Activated CD4-positive, alpha-beta memory T cell treated with anti-CD3 and anti-CD28 coated beads for 36 hours (primary cell): ENCODE measurements at regions of chr9 and their contacts with region 1.

Region 1: DNA sequence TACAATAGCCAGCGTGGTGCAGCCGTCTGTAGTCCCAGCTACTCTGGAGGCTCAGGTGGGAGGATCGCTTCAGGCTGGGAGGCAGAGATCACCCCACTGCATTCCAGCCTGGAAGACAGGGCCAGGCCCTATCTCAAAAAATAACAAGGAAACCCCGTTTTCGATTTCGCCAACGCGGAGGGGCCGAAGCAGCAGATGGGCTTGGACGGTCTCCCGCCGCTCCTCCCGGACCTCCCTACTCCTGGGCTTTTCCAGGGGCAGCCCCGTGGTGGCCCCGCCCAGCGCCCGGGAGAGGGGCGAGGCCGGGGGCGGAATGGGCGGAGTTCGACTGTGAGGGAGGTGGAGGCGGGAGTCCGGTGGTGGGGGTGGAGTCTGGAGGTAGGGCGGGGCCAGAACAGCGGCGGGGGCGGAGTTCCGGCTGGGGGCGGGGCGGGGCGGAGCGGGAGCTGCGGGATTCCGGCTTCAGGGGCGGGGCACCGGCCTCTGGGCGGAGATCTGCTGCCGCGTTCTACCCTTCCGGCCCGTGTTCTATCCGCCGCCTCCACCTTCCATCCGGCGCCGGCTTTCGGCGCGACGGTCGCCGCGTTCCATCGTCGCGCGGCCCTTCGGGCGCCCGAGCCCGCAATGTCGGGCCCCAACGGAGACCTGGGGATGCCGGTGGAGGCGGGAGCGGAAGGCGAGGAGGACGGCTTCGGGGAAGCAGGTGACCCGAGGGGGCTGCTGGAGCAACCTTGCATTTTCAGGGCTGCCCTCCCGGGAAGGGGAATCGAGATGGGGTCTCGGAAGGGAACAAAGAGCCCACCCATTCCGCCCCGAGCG is at the start of gene BBLN:
- DNase-seq: peak; percentile 97
- H3K4me3 Mint-ChIP-seq: peak within 1 kb of the TSS; percentile 74
- H3K27ac Mint-ChIP-seq: peak within 1 kb of the TSS; percentile 82
- H3K4me1 Mint-ChIP-seq: peaks cover 24% of the 10 kb centered on the region
- H3K27me3 Mint-ChIP-seq: no peaks in the 10 kb centered on the region
- total RNA-seq, gene BBLN: 86.9 to 90.1 TPM

Region 2: GRCh38 chr9:127742435-127743088 is 417.4 kb before region 1 on chr9:
- CTCF ChIA-PET with region 1: no interaction called
- POLR2A ChIA-PET with region 1: no interaction called
- intact Hi-C with region 1: no loop called
- DNase-seq: no peak
- H3K4me3 Mint-ChIP-seq: no peak overlapping the region
- H3K27ac Mint-ChIP-seq: no peak overlapping the region
- H3K4me1 Mint-ChIP-seq: no peaks in the 10 kb centered on the region
- H3K27me3 Mint-ChIP-seq: no peaks in the 10 kb centered on the region

Region 3: GRCh38 chr9:127987103-127987614 is 172.8 kb before region 1 on chr9:
- CTCF ChIA-PET with region 1: no interaction called
- POLR2A ChIA-PET with region 1: no interaction called
- intact Hi-C with region 1: no loop called
- DNase-seq: no peak
- H3K4me3 Mint-ChIP-seq: no peak overlapping the region
- H3K27ac Mint-ChIP-seq: no peak overlapping the region
- H3K4me1 Mint-ChIP-seq: peaks cover 26% of the 10 kb centered on the region
- H3K27me3 Mint-ChIP-seq: no peaks in the 10 kb centered on the region

Region 4: DNA sequence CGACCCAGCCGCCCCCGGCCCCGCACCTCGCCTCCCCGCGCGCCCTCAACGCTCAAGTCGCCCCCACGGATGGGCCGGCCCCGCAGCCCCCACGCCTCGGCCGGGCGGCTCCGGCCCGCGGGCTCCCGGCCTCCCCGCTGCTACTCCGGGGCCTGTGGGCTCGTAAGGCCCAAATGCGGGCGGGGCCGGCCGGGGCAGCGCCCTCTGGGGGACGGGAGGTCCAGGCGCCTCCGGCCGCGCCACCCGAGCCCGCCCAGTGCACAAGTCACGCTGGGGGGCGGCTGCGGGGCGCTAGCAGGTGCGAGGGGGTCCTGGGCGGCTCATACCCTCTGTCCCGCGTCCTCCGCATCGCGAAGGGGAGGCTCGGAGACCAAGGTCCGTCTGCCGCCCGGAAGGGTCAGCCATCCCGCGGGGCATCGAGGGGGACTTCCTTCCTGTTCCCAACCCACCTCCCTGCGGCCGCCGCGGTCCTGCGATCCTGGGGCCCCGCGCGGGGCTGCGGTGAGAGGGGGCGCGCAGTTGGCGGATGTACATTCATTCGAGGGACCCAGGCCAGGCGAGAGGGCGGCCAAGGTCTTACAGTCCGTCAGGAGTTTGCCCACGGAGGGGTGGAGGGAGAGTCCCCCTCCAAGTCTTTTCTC is 31.5 kb after region 1 on chr9 and contains the start of gene CIZ1:
- CTCF ChIA-PET with region 1: interaction called, 7 read pairs
- POLR2A ChIA-PET with region 1: interaction called, 19 read pairs
- intact Hi-C with region 1: no loop called
- DNase-seq: peak; percentile 76
- H3K4me3 Mint-ChIP-seq: peak within 1 kb of the TSS; percentile 99
- H3K27ac Mint-ChIP-seq: peak within 1 kb of the TSS; percentile 86
- H3K4me1 Mint-ChIP-seq: peaks cover 33% of the 10 kb centered on the region
- H3K27me3 Mint-ChIP-seq: no peaks in the 10 kb centered on the region
- total RNA-seq, gene CIZ1: 95.4 to 105 TPM

Region 5: DNA sequence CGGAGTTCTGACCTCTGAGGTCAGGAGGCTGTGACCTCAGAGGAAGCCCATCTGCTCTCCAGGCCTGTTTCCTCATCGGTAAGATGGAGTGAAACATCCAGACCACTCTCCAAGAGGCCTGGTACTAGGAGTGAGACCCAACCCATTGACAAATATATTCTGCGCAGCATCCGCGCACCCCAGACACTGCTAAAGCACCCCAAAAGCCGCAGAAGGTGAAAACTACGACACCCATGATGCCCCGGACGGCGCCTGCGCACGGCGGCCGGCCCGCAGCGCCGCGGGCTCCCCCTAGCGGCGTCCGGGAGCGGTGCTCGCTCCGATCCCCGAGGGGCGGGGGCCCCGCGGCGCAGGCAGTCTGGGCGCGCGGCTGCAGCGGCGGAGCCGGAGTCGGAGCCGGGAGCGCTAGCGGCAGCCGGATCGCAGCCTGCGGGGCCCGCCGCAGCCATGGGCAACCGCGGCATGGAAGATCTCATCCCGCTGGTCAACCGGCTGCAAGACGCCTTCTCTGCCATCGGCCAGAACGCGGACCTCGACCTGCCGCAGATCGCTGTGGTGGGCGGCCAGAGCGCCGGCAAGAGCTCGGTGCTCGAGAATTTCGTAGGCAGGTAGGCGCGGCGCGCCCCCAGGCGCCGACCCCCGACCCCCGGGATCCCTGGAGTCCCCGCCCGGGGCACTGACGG is 43.2 kb after region 1 on chr9 and contains the start of gene DNM1:
- CTCF ChIA-PET with region 1: interaction called, 3 read pairs
- POLR2A ChIA-PET with region 1: no interaction called
- intact Hi-C with region 1: loop called (anchors 1 kb)
- DNase-seq: peak; percentile 75
- H3K4me3 Mint-ChIP-seq: peak within 1 kb of the TSS; percentile 61
- H3K27ac Mint-ChIP-seq: peak within 1 kb of the TSS; percentile 53
- H3K4me1 Mint-ChIP-seq: peaks cover 16% of the 10 kb centered on the region
- H3K27me3 Mint-ChIP-seq: peaks cover 8% of the 10 kb centered on the region
- total RNA-seq, gene DNM1: 0.63 to 1.1 TPM